Activated CD4-positive, alpha-beta T cell treated with anti-CD3 and anti-CD28 coated beads for 36 hours (primary cell): ENCODE measurements at regions of chr11 and their contacts with region 1.

Region 1: DNA sequence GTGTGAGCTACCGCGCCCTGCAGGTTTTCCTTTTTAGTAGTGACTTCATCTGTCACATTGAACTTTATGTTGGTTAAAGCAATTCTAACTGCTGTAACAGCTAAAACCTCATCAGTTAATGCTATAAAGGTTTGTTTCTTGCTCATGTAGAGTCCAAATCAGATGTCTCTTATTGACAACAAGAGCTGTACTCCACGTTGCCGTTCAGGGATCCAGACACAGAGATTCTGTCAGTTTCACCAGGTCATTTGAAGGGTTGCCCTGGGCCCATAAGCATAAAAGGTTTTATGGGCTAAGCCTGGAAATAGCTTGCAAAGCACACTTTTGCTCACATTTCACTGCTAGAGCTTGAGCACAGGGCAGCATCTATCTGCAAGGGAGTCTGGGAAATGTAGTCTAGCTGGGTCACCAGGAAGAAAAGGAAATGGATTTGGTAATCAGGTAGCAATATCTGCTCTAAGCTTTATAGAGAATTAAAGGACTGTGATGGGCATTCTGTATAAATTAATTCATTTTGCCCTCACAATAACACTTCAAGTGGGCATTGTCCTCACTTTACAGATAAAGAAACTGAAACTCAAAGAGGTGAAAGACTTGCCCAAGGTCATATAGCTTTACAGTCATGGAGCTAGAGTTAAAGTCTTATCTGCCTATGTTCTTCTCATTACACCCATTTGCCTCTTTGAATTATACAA is 25.2 kb upstream of the PTPRJ start:
- DNase-seq: no peak
- ATAC-seq: peak; percentile 24
- H3K4me3 Mint-ChIP-seq: no peak overlapping the region
- H3K27ac Mint-ChIP-seq: no peak overlapping the region
- H3K4me1 Mint-ChIP-seq: peaks cover 14% of the 10 kb centered on the region
- H3K27me3 Mint-ChIP-seq: no peaks in the 10 kb centered on the region

Region 2: GRCh38 chr11:46160100-46160499 is 1795.1 kb before region 1 on chr11:
- CTCF ChIA-PET with region 1: no interaction called
- POLR2A ChIA-PET with region 1: no interaction called
- intact Hi-C with region 1: no loop called
- DNase-seq: no peak
- ATAC-seq: no peak
- H3K4me3 Mint-ChIP-seq: no peak overlapping the region
- H3K27ac Mint-ChIP-seq: no peak overlapping the region
- H3K4me1 Mint-ChIP-seq: peaks cover 9% of the 10 kb centered on the region
- H3K27me3 Mint-ChIP-seq: peaks cover 36% of the 10 kb centered on the region

Region 3: GRCh38 chr11:47924184-47924691 is 31.0 kb before region 1 on chr11:
- CTCF ChIA-PET with region 1: no interaction called
- POLR2A ChIA-PET with region 1: no interaction called
- intact Hi-C with region 1: loop called in 1 of 2 experiments (anchors 1 kb)
- DNase-seq: peak; percentile 37
- ATAC-seq: peak; percentile 49
- H3K4me3 Mint-ChIP-seq: no peak overlapping the region
- H3K27ac Mint-ChIP-seq: peak overlapping the region; percentile 65
- H3K4me1 Mint-ChIP-seq: peaks cover 37% of the 10 kb centered on the region
- H3K27me3 Mint-ChIP-seq: no peaks in the 10 kb centered on the region